CD4-positive, alpha-beta memory T cell (primary cell): ENCODE measurements at regions of chr10 and their contacts with region 1.

Region 1: DNA sequence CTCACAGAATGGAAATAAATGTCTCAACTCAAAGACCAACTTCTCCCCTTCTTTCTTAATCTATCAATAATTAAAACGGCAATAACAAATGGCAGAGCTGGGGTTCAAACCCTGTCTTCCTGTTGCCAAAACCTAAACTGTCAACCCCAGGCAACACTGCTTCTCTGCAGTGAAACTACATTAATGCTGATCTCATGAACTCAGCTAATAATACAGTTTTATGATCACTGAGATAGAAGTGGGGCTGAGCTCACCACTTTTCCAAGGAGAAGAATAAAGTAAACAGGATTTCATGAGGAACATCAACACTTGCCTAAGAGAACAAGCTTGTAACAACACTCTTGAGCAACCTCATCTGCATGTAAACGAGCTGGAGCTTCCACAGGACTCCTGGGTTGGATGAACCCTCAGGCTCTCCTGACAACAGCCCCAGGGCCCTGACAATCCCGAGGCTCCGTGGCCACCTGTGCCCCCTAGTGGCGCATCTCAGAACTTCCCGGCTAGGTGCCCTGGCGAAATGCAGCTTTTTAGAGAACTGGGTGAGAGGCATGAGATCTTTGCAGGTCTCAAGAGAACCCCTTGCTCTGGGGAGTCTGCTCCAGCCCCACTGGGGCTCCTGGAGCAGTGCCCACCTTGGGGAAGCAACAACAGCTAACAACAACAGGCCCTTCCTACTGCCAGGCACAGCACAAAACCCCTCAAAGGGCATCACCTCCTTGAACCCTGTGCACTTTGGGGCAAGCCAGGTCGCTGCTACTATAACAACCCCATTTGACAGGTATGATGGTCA is 169.3 kb downstream of the SH3PXD2A start:
- DNase-seq: peak; percentile 66 to 78 (median 71)
- H3K4me3 ChIP-seq: no peak overlapping the region
- H3K4me3 Mint-ChIP-seq: peak overlapping the region in 1 of 8 donors; percentile 61
- H3K27ac ChIP-seq: no peak overlapping the region
- H3K27ac Mint-ChIP-seq: peak overlapping the region in 5 of 7 donors; percentile 30 to 84 (median 74)
- H3K4me1 ChIP-seq: peaks cover under 1% of the 10 kb centered on the region
- H3K4me1 Mint-ChIP-seq: peaks cover 3 to 20% (median 5%) of the 10 kb centered on the region in 4 donors
- H3K27me3 ChIP-seq: no peaks in the 10 kb centered on the region
- H3K27me3 Mint-ChIP-seq: no peaks in the 10 kb centered on the region

Region 2: GRCh38 chr10:103416436-103417147 is 269.5 kb before region 1 on chr10:
- CTCF ChIA-PET with region 1: interaction called, 13 read pairs
- POLR2A ChIA-PET with region 1: no interaction called
- intact Hi-C with region 1: no loop called
- DNase-seq: peak; percentile 58 to 67 (median 60)
- H3K4me3 ChIP-seq: no peak overlapping the region
- H3K4me3 Mint-ChIP-seq: no peak overlapping the region
- H3K27ac ChIP-seq: no peak overlapping the region
- H3K27ac Mint-ChIP-seq: peak overlapping the region in 5 of 7 donors; percentile 2 to 80 (median 34)
- H3K4me1 ChIP-seq: no peaks in the 10 kb centered on the region
- H3K4me1 Mint-ChIP-seq: peaks cover 3 to 8% (median 5%) of the 10 kb centered on the region in 4 donors
- H3K27me3 ChIP-seq: no peaks in the 10 kb centered on the region
- H3K27me3 Mint-ChIP-seq: no peaks in the 10 kb centered on the region

Region 3: GRCh38 chr10:103598654-103599115 is 87.4 kb before region 1 on chr10:
- CTCF ChIA-PET with region 1: interaction called, 103 read pairs
- POLR2A ChIA-PET with region 1: no interaction called
- intact Hi-C with region 1: no loop called
- DNase-seq: no peak
- H3K4me3 ChIP-seq: no peak overlapping the region
- H3K4me3 Mint-ChIP-seq: no peak overlapping the region
- H3K27ac ChIP-seq: no peak overlapping the region
- H3K27ac Mint-ChIP-seq: peak overlapping the region in 1 of 7 donors; percentile 59
- H3K4me1 ChIP-seq: no peaks in the 10 kb centered on the region
- H3K4me1 Mint-ChIP-seq: no peaks in the 10 kb centered on the region
- H3K27me3 ChIP-seq: no peaks in the 10 kb centered on the region
- H3K27me3 Mint-ChIP-seq: no peaks in the 10 kb centered on the region

Region 4: GRCh38 chr10:103612462-103613365 is 73.4 kb before region 1 on chr10:
- CTCF ChIA-PET with region 1: interaction called, 28 read pairs
- POLR2A ChIA-PET with region 1: interaction called, 3 read pairs
- intact Hi-C with region 1: no loop called
- DNase-seq: no peak
- H3K4me3 ChIP-seq: no peak overlapping the region
- H3K4me3 Mint-ChIP-seq: no peak overlapping the region
- H3K27ac ChIP-seq: no peak overlapping the region
- H3K27ac Mint-ChIP-seq: no peak overlapping the region
- H3K4me1 ChIP-seq: no peaks in the 10 kb centered on the region
- H3K4me1 Mint-ChIP-seq: no peaks in the 10 kb centered on the region
- H3K27me3 ChIP-seq: no peaks in the 10 kb centered on the region
- H3K27me3 Mint-ChIP-seq: no peaks in the 10 kb centered on the region

Region 5: GRCh38 chr10:103643381-103643780 is 42.7 kb before region 1 on chr10:
- CTCF ChIA-PET with region 1: no interaction called
- POLR2A ChIA-PET with region 1: no interaction called
- intact Hi-C with region 1: no loop called
- DNase-seq: no peak
- H3K4me3 ChIP-seq: no peak overlapping the region
- H3K4me3 Mint-ChIP-seq: no peak overlapping the region
- H3K27ac ChIP-seq: no peak overlapping the region
- H3K27ac Mint-ChIP-seq: no peak overlapping the region
- H3K4me1 ChIP-seq: no peaks in the 10 kb centered on the region
- H3K4me1 Mint-ChIP-seq: peaks cover 0 to 5% (median 0%) of the 10 kb centered on the region in 4 donors
- H3K27me3 ChIP-seq: no peaks in the 10 kb centered on the region
- H3K27me3 Mint-ChIP-seq: no peaks in the 10 kb centered on the region

Region 6: GRCh38 chr10:103659674-103660363 is 26.3 kb before region 1 on chr10:
- CTCF ChIA-PET with region 1: interaction called, 37 read pairs
- POLR2A ChIA-PET with region 1: no interaction called
- intact Hi-C with region 1: no loop called
- DNase-seq: peak; percentile 53 to 77 (median 58)
- H3K4me3 ChIP-seq: peak overlapping the region; percentile 49 to 74
- H3K4me3 Mint-ChIP-seq: peak overlapping the region; percentile 87 to 92 (median 90)
- H3K27ac ChIP-seq: peak overlapping the region; percentile 76
- H3K27ac Mint-ChIP-seq: peak overlapping the region; percentile 89 to 95 (median 93)
- H3K4me1 ChIP-seq: peaks cover 27% of the 10 kb centered on the region
- H3K4me1 Mint-ChIP-seq: peaks cover 9 to 38% (median 15%) of the 10 kb centered on the region in 4 donors
- H3K27me3 ChIP-seq: no peaks in the 10 kb centered on the region
- H3K27me3 Mint-ChIP-seq: no peaks in the 10 kb centered on the region

Region 7: DNA sequence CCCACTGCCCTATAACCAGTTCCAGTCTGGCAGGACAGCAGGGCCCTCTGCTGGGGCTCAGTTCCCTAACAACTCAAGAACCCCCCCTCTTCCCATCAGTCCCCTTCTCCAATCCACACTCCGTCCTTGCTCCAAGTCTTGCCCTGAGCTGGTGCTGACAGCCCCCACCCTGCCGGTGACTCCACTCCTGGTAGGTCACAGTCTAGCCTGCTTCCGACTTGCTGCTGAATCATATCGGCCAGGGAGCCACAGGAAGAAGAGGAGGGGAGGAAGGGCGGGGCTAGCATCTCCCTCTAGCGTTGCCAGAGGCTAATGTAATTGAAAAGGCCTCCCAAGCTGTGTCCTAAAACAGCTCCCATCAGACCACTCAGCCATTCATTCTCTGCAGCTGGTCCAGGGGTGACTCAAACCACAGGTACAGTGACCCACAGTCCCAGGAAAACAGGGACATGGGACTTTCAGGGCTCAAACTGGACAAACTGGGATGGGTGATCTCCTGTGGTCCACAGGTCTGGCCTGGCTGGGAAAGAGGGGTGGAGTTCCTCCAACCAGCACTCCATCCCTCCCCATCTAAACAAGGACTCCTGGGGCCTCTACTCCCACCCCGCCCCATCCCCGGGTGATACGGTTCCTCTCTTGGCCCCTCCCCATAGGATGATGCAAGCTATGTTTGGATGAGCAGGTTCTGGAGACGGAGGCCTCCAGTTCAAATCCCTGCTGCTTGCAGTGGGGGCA is 10.5 kb after region 1 on chr10:
- CTCF ChIA-PET with region 1: interaction called, 53 read pairs
- POLR2A ChIA-PET with region 1: no interaction called
- intact Hi-C with region 1: no loop called
- DNase-seq: peak; percentile 56 to 85 (median 57)
- H3K4me3 ChIP-seq: no peak overlapping the region
- H3K4me3 Mint-ChIP-seq: peak overlapping the region in 7 of 8 donors; percentile 59 to 88 (median 79)
- H3K27ac ChIP-seq: peak overlapping the region; percentile 5
- H3K27ac Mint-ChIP-seq: peak overlapping the region; percentile 55 to 94 (median 92)
- H3K4me1 ChIP-seq: peaks cover 48% of the 10 kb centered on the region
- H3K4me1 Mint-ChIP-seq: peaks cover 16 to 40% (median 25%) of the 10 kb centered on the region in 4 donors
- H3K27me3 ChIP-seq: no peaks in the 10 kb centered on the region
- H3K27me3 Mint-ChIP-seq: no peaks in the 10 kb centered on the region